Naive thymus-derived CD4-positive, alpha-beta T cell (primary cell): ENCODE measurements at regions of chr6 and their contacts with region 1.

Region 1: GRCh38 chr6:30541515-30542403 is 14.5 kb downstream of the GNL1 start:
- DNase-seq: peak; percentile 60 to 84 (median 81)
- ATAC-seq: peak; percentile 84
- H3K4me3 ChIP-seq: peak overlapping the region; percentile 64
- H3K4me3 Mint-ChIP-seq: peak overlapping the region; percentile 83 to 92 (median 86)
- H3K27ac ChIP-seq: peak overlapping the region; percentile 67
- H3K27ac Mint-ChIP-seq: peak overlapping the region; percentile 82 to 96 (median 93)
- H3K4me1 ChIP-seq: peaks cover 26 to 29% of the 10 kb centered on the region in 2 donors
- H3K4me1 Mint-ChIP-seq: peaks cover 29 to 38% (median 35%) of the 10 kb centered on the region in 7 donors
- H3K27me3 ChIP-seq: no peaks in the 10 kb centered on the region
- H3K27me3 Mint-ChIP-seq: peaks cover 0 to 3% (median 0%) of the 10 kb centered on the region in 5 donors

Region 2: DNA sequence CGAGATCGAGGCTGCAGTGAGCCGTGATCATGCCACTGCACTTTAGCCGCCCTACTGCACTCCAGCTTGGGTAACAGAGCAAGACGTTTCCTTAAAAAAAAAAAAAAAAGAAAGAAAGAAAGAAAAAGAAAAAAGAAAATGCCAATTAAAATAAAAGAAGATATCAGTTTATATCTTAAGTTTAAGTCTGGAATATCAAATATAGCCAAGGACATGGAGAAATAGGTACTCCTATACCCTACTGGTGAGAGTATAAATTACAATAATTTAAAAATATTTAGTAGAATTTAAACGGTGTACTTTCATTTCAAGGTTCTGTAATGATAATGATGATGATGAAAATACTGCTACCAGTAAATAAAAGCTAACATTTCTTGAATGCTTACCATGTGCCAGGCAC is 425.0 kb before region 1 on chr6:
- CTCF ChIA-PET with region 1: no interaction called
- POLR2A ChIA-PET with region 1: no interaction called
- intact Hi-C with region 1: no loop called
- DNase-seq: no peak
- ATAC-seq: no peak
- H3K4me3 ChIP-seq: no peak overlapping the region
- H3K4me3 Mint-ChIP-seq: no peak overlapping the region
- H3K27ac ChIP-seq: no peak overlapping the region
- H3K27ac Mint-ChIP-seq: no peak overlapping the region
- H3K4me1 ChIP-seq: no peaks in the 10 kb centered on the region
- H3K4me1 Mint-ChIP-seq: peaks cover 0 to 9% (median 0%) of the 10 kb centered on the region in 7 donors
- H3K27me3 ChIP-seq: peaks cover 0 to 5% of the 10 kb centered on the region in 2 donors
- H3K27me3 Mint-ChIP-seq: peaks cover 23 to 62% (median 37%) of the 10 kb centered on the region in 5 donors

Region 3: GRCh38 chr6:30483677-30484279 is 58.0 kb before region 1 on chr6:
- CTCF ChIA-PET with region 1: interaction called, 263 read pairs
- POLR2A ChIA-PET with region 1: interaction called, 199 read pairs
- intact Hi-C with region 1: loop called (anchors 1 kb)
- DNase-seq: peak in 4 of 9 donors; percentile 42 to 56 (median 54)
- ATAC-seq: no peak
- H3K4me3 ChIP-seq: no peak overlapping the region
- H3K4me3 Mint-ChIP-seq: no peak overlapping the region
- H3K27ac ChIP-seq: no peak overlapping the region
- H3K27ac Mint-ChIP-seq: peak overlapping the region in 1 of 9 donors; percentile 7
- H3K4me1 ChIP-seq: peaks cover 21 to 23% of the 10 kb centered on the region in 2 donors
- H3K4me1 Mint-ChIP-seq: peaks cover 19 to 49% (median 39%) of the 10 kb centered on the region in 7 donors
- H3K27me3 ChIP-seq: peaks cover 8 to 23% of the 10 kb centered on the region in 2 donors
- H3K27me3 Mint-ChIP-seq: peaks cover 26 to 52% (median 30%) of the 10 kb centered on the region in 5 donors

Region 4: DNA sequence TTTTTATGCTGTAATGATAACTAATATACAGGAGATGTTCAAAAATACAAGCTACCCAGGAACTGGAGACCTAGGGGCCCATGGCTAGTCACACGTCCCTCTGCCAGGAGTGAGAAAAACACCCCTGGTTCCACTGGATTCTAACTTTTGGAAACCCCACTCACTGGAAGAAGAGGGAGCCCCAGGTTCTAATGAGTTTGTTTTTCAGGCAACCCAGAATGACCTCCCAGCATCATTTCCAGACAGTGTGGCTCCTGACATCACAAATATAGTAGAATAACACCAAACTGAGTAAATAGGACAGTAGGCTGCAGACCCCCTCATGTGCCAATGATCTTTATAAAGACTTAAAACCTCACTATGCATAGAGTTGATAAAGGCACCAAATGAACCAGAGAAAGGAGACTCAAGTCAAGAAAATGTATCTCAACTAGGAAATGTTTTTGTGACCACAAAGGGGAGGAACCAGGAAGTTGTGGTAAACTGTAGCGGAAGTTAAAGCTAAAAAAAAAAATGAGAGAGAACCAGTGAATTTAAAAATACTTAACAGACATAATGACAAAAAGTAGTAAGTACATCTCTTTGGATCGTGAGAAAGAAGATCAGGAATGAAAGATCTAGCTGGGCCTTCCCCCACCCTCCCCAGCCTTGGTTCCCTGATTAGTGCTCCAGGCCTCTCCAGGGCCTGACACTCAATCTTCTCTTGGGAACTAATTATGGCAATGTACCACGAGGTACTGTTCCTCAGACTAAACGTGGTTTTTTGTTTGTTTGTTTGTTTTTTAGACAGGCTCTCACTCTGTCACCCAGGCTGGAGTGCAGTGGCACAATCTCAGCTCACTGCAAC is 32.6 kb before region 1 on chr6:
- CTCF ChIA-PET with region 1: interaction called, 48 read pairs
- POLR2A ChIA-PET with region 1: interaction called, 16 read pairs
- intact Hi-C with region 1: no loop called
- DNase-seq: peak in 7 of 9 donors; percentile 72 to 88 (median 86)
- ATAC-seq: peak; percentile 90
- H3K4me3 ChIP-seq: peak overlapping the region; percentile 55
- H3K4me3 Mint-ChIP-seq: peak overlapping the region; percentile 60 to 89 (median 80)
- H3K27ac ChIP-seq: peak overlapping the region; percentile 43
- H3K27ac Mint-ChIP-seq: peak overlapping the region; percentile 73 to 97 (median 85)
- H3K4me1 ChIP-seq: peaks cover 44 to 73% of the 10 kb centered on the region in 2 donors
- H3K4me1 Mint-ChIP-seq: peaks cover 38 to 78% (median 59%) of the 10 kb centered on the region in 7 donors
- H3K27me3 ChIP-seq: no peaks in the 10 kb centered on the region
- H3K27me3 Mint-ChIP-seq: no peaks in the 10 kb centered on the region

Region 5: DNA sequence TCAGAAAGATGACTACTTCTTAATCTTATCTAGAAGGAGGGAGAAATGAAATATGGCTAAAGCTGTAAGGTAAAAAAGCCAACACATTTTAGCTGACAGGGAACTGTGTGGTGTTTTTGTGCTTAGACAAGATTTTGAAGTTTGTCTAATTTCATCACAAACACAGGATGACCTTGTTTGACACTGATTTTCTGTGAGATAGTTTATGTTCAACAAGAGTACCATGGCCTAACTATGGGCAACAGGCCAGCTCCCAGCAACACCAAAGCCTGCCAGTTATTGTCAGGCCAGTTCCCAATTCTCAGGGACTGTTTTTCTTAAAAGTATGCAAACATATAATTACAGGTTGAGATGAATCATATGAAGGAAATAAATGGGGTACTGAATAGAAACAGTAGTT is 24.0 kb after region 1 on chr6:
- CTCF ChIA-PET with region 1: interaction called, 6 read pairs
- POLR2A ChIA-PET with region 1: interaction called, 25 read pairs
- intact Hi-C with region 1: no loop called
- DNase-seq: no peak
- ATAC-seq: no peak
- H3K4me3 ChIP-seq: no peak overlapping the region
- H3K4me3 Mint-ChIP-seq: no peak overlapping the region
- H3K27ac ChIP-seq: no peak overlapping the region
- H3K27ac Mint-ChIP-seq: peak overlapping the region in 5 of 9 donors; percentile 43 to 75 (median 64)
- H3K4me1 ChIP-seq: peaks cover 8 to 12% of the 10 kb centered on the region in 2 donors
- H3K4me1 Mint-ChIP-seq: peaks cover 17 to 45% (median 36%) of the 10 kb centered on the region in 7 donors
- H3K27me3 ChIP-seq: no peaks in the 10 kb centered on the region
- H3K27me3 Mint-ChIP-seq: peaks cover 0 to 4% (median 0%) of the 10 kb centered on the region in 5 donors

Region 6: GRCh38 chr6:30672445-30673253 is 130.9 kb after region 1 on chr6 and contains the start of gene DHX16:
- CTCF ChIA-PET with region 1: interaction called, 10 read pairs
- POLR2A ChIA-PET with region 1: interaction called, 3 read pairs
- intact Hi-C with region 1: loop called in 1 of 2 experiments (anchors 1 kb)
- DNase-seq: peak; percentile 65 to 85 (median 83)
- ATAC-seq: peak; percentile 93
- H3K4me3 ChIP-seq: peak within 1 kb of the TSS; percentile 74
- H3K4me3 Mint-ChIP-seq: peak within 1 kb of the TSS; percentile 87 to 94 (median 91)
- H3K27ac ChIP-seq: peak within 1 kb of the TSS; percentile 77
- H3K27ac Mint-ChIP-seq: peak within 1 kb of the TSS; percentile 70 to 93 (median 91)
- H3K4me1 ChIP-seq: peaks cover 8 to 15% of the 10 kb centered on the region in 2 donors
- H3K4me1 Mint-ChIP-seq: peaks cover 28 to 46% (median 43%) of the 10 kb centered on the region in 7 donors
- H3K27me3 ChIP-seq: no peaks in the 10 kb centered on the region
- H3K27me3 Mint-ChIP-seq: no peaks in the 10 kb centered on the region
- total RNA-seq, gene DHX16: 25.9 to 51.5 (median 46.7) TPM

Region 7: DNA sequence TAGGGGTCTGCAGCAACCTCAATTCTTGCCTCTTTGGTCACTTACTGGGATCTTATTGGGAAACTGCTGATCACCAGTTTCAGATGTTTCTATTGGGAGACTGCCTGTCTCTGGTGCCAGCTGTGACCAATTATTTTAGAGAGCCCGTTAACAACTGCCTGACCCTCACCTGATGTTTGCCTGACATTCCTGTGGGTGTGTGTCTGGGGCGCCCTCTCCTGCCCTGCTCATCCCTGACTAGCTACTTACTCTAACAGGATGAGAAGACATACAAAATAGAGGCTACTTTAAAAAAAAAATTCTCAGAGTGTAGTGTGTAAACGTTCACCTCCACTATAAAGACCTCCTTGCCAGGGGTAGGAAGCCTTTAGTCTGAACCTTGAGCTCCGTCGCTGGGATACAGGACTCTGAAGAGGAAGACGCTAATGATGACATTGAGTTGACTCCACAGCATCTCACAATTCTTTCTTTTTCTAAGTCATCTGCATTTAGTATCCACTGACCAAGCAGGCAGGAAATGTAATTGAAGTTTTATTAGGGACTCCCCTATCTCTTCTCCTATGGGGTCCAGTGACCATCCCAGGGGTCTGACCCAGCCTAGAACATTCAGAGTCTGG is 288.0 kb after region 1 on chr6:
- CTCF ChIA-PET with region 1: no interaction called
- POLR2A ChIA-PET with region 1: no interaction called
- intact Hi-C with region 1: no loop called
- DNase-seq: peak in 1 of 9 donors; percentile 19
- ATAC-seq: no peak
- H3K4me3 ChIP-seq: peak overlapping the region; percentile 80
- H3K4me3 Mint-ChIP-seq: peak overlapping the region; percentile 89 to 100 (median 96)
- H3K27ac ChIP-seq: peak overlapping the region; percentile 84
- H3K27ac Mint-ChIP-seq: peak overlapping the region; percentile 75 to 99 (median 97)
- H3K4me1 ChIP-seq: peaks cover 42 to 43% of the 10 kb centered on the region in 2 donors
- H3K4me1 Mint-ChIP-seq: peaks cover 57 to 92% (median 85%) of the 10 kb centered on the region in 7 donors
- H3K27me3 ChIP-seq: no peaks in the 10 kb centered on the region
- H3K27me3 Mint-ChIP-seq: no peaks in the 10 kb centered on the region

Region 8: GRCh38 chr6:30877419-30878371 is 335.9 kb after region 1 on chr6:
- CTCF ChIA-PET with region 1: no interaction called
- POLR2A ChIA-PET with region 1: no interaction called
- intact Hi-C with region 1: loop called in 1 of 2 experiments (anchors 1 kb)
- DNase-seq: peak; percentile 52 to 72 (median 63)
- ATAC-seq: peak; percentile 93
- H3K4me3 ChIP-seq: peak overlapping the region; percentile 40
- H3K4me3 Mint-ChIP-seq: peak overlapping the region; percentile 69 to 90 (median 86)
- H3K27ac ChIP-seq: peak overlapping the region; percentile 50
- H3K27ac Mint-ChIP-seq: peak overlapping the region; percentile 44 to 91 (median 84)
- H3K4me1 ChIP-seq: peaks cover 8 to 15% of the 10 kb centered on the region in 2 donors
- H3K4me1 Mint-ChIP-seq: peaks cover 10 to 31% (median 19%) of the 10 kb centered on the region in 7 donors
- H3K27me3 ChIP-seq: no peaks in the 10 kb centered on the region
- H3K27me3 Mint-ChIP-seq: peaks cover 0 to 7% (median 0%) of the 10 kb centered on the region in 5 donors